ENCODE measurements at regions of chr3 and their contacts with region 1.

Region 1: GRCh38 chr3:99269606-99270351 is 368.3 kb upstream of the DCBLD2 start:
- DNase-seq: peak; percentile 66
- H3K4me3 Mint-ChIP-seq: no peak overlapping the region
- H3K27ac Mint-ChIP-seq: no peak overlapping the region
- H3K4me1 Mint-ChIP-seq: peaks cover 23% of the 10 kb centered on the region
- H3K27me3 Mint-ChIP-seq: no peaks in the 10 kb centered on the region
- CTCF ChIP-seq: no peak

Region 2: DNA sequence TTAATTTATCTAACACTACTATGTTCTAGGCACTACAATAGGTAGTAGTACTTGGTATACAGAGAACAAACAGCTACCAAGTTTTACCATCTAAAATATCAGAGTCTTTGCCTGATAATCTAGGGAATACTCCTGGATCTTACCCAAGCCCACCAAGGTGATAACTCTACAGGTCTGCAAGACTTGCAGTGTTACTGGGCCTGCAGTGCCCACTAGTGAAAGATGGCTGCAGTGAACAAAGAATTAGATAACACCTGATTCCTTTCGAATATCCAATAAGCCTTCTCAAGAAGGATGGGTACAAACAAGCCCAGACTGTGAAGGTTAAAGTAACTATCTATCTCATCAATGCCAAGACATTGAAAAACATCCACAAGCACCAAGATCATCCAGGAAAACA is 51.3 kb before region 1 on chr3:
- CTCF ChIA-PET with region 1: no interaction called
- POLR2A ChIA-PET with region 1: no interaction called
- intact Hi-C with region 1: loop called (anchors 10 kb)
- DNase-seq: no peak
- H3K4me3 Mint-ChIP-seq: no peak overlapping the region
- H3K27ac Mint-ChIP-seq: no peak overlapping the region
- H3K4me1 Mint-ChIP-seq: no peaks in the 10 kb centered on the region
- H3K27me3 Mint-ChIP-seq: no peaks in the 10 kb centered on the region
- CTCF ChIP-seq: no peak

Measured in MCF 10A (cell line).